ENCODE measurements at regions of chr1 and their contacts with region 1.

Region 1: GRCh38 chr1:10415211-10415930 is 14.9 kb upstream of the CENPS start:
- ATAC-seq: peak in 6 of 8 experiments; percentile 11 to 81 (median 28)
- H3K4me3 ChIP-seq: no peak overlapping the region
- H3K27ac ChIP-seq: no peak overlapping the region
- H3K4me1 ChIP-seq: no peaks in the 10 kb centered on the region

Region 2: DNA sequence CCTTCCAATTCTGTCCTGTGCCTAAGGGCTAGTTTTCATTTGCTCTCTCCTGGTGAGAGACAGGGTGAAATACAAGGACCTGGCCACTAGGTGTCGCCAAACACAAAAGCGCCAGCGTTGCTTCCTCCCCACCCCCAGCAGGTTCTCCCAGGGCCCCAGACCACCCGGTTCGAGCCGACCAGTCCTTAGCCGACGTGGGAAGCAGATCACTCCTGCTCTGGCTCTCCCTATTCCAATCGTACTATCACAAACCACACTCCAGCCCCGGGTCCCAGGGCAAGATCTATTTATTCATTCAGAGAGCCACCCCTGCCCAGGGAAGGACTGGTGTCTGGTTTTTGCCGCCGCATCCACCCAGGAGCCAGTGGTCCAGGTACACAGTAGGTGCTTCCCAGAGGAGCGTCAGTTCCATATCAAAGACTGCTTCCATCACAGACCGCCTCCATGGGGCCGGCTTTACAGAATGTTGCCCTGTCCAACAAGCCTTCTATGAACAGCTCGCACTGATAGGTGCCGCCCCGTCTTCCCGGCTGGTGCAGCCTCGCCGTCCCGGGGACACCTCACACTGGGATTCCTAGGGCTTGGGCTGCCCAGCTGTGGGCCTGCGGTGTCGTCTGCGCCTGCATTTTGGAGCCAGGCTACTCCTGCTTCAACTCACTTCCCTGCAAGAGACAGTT is 540.3 kb before region 1 on chr1:
- in situ Hi-C with region 1: loop called in 3 of 9 experiments (anchors 10 to 25 kb)
- ATAC-seq: peak; percentile 38 to 96 (median 90)
- H3K4me3 ChIP-seq: peak overlapping the region in 1 of 5 donors; percentile 2
- H3K27ac ChIP-seq: peak overlapping the region in 1 of 2 donors; percentile 2
- H3K4me1 ChIP-seq: peaks cover 4 to 7% of the 10 kb centered on the region in 2 donors

Region 3: GRCh38 chr1:9942939-9943788 is 472.2 kb before region 1 on chr1 and contains the starts of genes LZIC and NMNAT1:
- in situ Hi-C with region 1: loop called in 1 of 9 experiments (anchors 25 kb)
- ATAC-seq: peak; percentile 97 to 100 (median 100)
- H3K4me3 ChIP-seq: peak within 1 kb of the TSS; percentile 61 to 88 (median 69)
- H3K27ac ChIP-seq: peak within 1 kb of the TSS; percentile 62 to 86
- H3K4me1 ChIP-seq: peaks cover 9 to 10% of the 10 kb centered on the region in 2 donors
- total RNA-seq, gene LZIC: 19.0 to 88.2 (median 58.2) TPM
- total RNA-seq, gene NMNAT1: 7.4 to 16.3 (median 9.4) TPM

Region 4: DNA sequence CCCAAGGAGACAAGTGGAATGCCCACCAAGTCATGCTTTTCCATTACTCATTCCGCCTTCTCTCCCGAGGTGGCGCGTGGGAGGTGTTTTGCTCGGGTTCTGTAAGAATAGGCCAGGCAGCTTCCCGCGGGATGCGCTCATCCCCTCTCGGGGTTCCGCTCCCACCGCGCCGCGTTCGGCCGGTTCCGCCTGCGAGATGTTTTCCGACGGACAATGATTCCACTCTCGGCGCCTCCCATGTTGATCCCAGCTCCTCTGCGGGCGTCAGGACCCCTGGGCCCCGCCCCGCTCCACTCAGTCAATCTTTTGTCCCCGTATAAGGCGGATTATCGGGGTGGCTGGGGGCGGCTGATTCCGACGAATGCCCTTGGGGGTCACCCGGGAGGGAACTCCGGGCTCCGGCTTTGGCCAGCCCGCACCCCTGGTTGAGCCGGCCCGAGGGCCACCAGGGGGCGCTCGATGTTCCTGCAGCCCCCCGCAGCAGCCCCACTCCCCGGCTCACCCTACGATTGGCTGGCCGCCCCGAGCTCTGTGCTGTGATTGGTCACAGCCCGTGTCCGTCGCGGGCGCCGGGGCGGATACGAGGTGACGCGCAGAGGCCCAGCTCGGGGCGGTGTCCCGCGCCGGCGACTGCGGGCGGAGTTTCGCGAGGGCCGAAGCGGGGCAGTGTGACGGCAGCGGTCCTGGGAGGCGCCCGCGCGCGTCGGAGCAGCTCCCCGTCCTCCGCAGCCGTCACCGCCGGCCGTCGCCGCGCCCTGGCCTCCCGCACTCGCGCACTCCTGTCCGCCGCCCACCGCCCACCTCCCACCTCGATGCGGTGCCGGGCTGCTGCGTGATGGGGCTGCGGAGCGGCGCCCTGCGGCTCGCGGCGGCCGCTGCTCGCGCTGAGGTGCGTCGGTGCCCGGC is 205.2 kb before region 1 on chr1 and contains the start of gene KIF1B:
- in situ Hi-C with region 1: no loop called
- ATAC-seq: peak; percentile 86 to 92 (median 89)
- H3K4me3 ChIP-seq: peak within 1 kb of the TSS; percentile 55 to 96 (median 72)
- H3K27ac ChIP-seq: peak within 1 kb of the TSS; percentile 93 to 97
- H3K4me1 ChIP-seq: peaks cover 13 to 19% of the 10 kb centered on the region in 2 donors
- total RNA-seq, gene KIF1B: 17.4 to 179 (median 157) TPM

Measured in motor neuron (in vitro differentiated cells).